ENCODE measurements at regions of chr14 and their contacts with region 1.

Region 1: GRCh38 chr14:106802423-106803364 is 1276.3 kb downstream of the TMEM121 start:
- DNase-seq: peak; percentile 31
- H3K4me3 ChIP-seq: no peak overlapping the region
- H3K27ac ChIP-seq: no peak overlapping the region
- H3K4me1 ChIP-seq: no peaks in the 10 kb centered on the region
- H3K27me3 ChIP-seq: peaks cover 10% of the 10 kb centered on the region; the same call in 1 of the 2 replicates
- CTCF ChIP-seq: peak; percentile 49
- EP300 ChIP-seq: no peak
- RAD21 ChIP-seq: no peak

Region 2: DNA sequence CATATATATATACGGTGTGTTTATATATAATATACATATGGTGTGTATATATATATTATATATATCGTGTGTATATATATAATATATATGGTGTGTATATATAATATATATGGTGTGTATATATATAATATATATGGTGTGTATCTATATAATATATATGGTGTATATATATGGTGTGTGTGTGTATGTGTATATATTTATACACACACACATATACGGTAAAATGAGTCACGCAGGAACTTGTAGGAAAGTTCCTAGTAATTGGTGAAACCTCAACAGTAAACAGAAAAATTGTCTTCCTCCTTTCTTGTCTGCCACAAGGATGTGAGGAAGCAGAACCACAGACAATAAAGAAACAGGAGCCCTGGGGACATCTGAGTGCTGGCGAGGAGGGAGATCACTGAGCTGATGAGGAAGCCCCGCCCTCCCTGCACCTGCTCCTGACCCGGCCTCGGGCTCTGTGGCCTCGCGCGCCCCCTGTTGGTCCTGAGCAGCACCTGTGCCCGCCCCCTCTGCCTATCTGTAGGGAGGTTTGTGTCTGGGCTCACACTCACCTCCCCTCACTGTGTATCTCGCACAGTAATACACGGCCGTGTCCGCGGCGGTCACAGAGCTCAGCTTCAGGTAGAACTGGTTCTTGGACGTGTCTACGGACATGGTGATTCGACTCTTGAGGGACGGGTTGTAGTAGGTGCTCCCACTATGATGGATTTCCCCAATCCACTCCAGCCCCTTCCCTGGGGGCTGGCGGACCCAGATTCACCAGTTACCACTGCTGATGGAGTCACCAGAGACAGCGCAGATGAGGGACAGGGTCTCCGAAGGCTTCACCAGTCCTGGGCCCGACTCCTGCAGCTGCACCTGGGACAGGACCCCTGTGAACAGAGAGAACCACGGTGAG is 196.9 kb before region 1 on chr14:
- CTCF ChIA-PET with region 1: no interaction called
- POLR2A ChIA-PET with region 1: no interaction called
- DNase-seq: peak; percentile 54
- H3K4me3 ChIP-seq: no peak overlapping the region
- H3K27ac ChIP-seq: no peak overlapping the region
- H3K4me1 ChIP-seq: no peaks in the 10 kb centered on the region
- H3K27me3 ChIP-seq: peaks cover 15% of the 10 kb centered on the region; the same call in 1 of the 2 replicates
- CTCF ChIP-seq: peak; percentile 48
- EP300 ChIP-seq: no peak
- RAD21 ChIP-seq: no peak

Region 3: DNA sequence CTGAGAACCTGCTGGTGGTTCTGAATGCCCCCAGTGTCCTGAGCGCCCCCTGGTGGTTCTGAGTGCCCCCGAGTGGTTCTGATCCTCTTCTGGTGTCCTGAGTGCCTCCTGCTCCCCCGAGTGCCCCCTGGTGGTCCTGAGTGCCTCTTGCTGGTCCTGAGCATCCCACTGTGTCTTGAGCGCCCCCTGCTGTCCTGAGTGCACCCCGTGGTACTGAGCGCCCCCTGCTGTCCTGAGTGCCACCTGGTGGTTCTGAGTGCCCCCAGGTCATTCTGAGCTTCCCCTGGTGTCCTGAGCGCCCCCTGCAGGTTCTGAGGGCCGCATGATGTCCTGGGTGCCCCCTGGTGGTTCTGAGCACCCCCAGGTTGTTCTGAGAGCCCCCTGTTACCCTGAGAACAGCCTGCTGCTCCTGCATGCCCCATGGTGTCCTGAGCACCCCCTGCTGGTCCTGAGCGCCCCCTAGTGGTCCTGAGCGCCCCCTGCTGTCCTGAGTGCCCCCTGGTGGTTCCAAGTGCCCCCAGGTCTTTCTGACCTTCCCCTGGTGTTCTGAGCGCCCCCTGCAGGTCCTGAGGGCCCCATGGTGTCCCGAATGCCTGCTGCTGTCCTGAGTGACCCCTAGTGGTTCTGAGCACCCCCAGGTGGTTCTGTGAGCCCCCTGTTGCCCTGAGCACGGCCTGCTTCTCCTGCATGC is 110.9 kb before region 1 on chr14:
- CTCF ChIA-PET with region 1: no interaction called
- POLR2A ChIA-PET with region 1: no interaction called
- DNase-seq: peak; percentile 23
- H3K4me3 ChIP-seq: no peak overlapping the region
- H3K27ac ChIP-seq: no peak overlapping the region
- H3K4me1 ChIP-seq: no peaks in the 10 kb centered on the region
- H3K27me3 ChIP-seq: no peaks in the 10 kb centered on the region
- CTCF ChIP-seq: peak; percentile 41
- EP300 ChIP-seq: no peak
- RAD21 ChIP-seq: no peak

Region 4: GRCh38 chr14:106776395-106776983 is 26.2 kb before region 1 on chr14:
- CTCF ChIA-PET with region 1: no interaction called
- POLR2A ChIA-PET with region 1: no interaction called
- DNase-seq: no peak
- H3K4me3 ChIP-seq: no peak overlapping the region
- H3K27ac ChIP-seq: no peak overlapping the region
- H3K4me1 ChIP-seq: no peaks in the 10 kb centered on the region
- H3K27me3 ChIP-seq: peaks cover 11% of the 10 kb centered on the region; the same call in 1 of the 2 replicates
- CTCF ChIP-seq: no peak
- EP300 ChIP-seq: no peak
- RAD21 ChIP-seq: no peak

Region 5: DNA sequence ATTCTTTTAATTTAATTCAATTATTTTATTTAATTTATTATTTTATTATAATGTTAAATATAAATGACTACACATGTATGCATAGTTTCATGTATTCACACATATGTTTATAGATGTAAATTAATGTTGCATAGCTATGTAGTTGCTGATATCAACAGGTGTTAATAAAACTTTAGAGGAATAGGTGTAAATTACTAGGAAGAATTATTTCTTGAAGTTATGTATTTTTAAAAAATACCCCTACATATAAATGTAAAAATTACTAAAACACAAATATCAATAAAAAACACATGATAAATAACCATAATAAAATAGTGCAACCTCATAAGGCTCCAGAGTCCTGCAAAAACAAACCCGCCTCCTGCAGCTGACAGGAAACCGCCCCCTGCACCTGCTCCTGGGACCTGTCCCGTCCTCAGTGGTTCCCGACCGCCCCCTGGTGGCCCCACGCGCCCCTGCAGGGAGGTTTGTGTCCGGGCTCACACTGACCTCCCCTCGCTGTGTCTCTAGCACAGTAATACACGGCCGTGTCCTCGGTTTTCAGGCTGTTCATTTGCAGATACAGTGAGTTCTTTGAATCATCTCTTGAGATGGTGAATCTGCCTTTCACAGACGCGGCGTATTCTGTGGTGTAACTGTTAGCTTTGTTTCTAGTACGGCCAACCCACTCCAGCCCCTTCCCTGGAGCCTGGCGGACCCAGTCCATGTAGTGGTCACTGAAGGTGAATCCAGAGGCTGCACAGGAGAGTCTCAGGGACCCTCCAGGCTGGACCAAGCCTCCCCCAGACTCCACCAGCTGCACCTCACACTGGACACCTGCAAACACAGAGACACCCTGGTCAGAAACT is 12.3 kb before region 1 on chr14:
- CTCF ChIA-PET with region 1: interaction called, 19 read pairs
- POLR2A ChIA-PET with region 1: no interaction called
- DNase-seq: peak; percentile 68
- H3K4me3 ChIP-seq: no peak overlapping the region
- H3K27ac ChIP-seq: no peak overlapping the region
- H3K4me1 ChIP-seq: no peaks in the 10 kb centered on the region
- H3K27me3 ChIP-seq: peaks cover 27% of the 10 kb centered on the region
- CTCF ChIP-seq: peak; percentile 87
- EP300 ChIP-seq: no peak
- RAD21 ChIP-seq: peak; percentile 30